B cell (primary cell): ENCODE measurements at regions of chr2 and their contacts with region 1.

Region 1: GRCh38 chr2:157497638-157498314 is 53.9 kb upstream of the CYTIP start:
- DNase-seq: peak; percentile 58
- ATAC-seq: peak; percentile 71
- H3K4me3 ChIP-seq: no peak overlapping the region
- H3K4me3 Mint-ChIP-seq: no peak overlapping the region
- H3K27ac ChIP-seq: no peak overlapping the region
- H3K27ac Mint-ChIP-seq: no peak overlapping the region
- H3K4me1 ChIP-seq: peaks cover 23 to 27% of the 10 kb centered on the region in 2 donors
- H3K4me1 Mint-ChIP-seq: peaks cover 41% of the 10 kb centered on the region
- H3K27me3 ChIP-seq: no peaks in the 10 kb centered on the region
- H3K27me3 Mint-ChIP-seq: no peaks in the 10 kb centered on the region
- CTCF ChIP-seq: peak; percentile 88

Region 2: GRCh38 chr2:157143901-157144300 is 353.9 kb before region 1 on chr2:
- CTCF ChIA-PET with region 1: no interaction called
- POLR2A ChIA-PET with region 1: no interaction called
- intact Hi-C with region 1: no loop called
- DNase-seq: no peak
- ATAC-seq: no peak
- H3K4me3 ChIP-seq: no peak overlapping the region
- H3K4me3 Mint-ChIP-seq: no peak overlapping the region
- H3K27ac ChIP-seq: no peak overlapping the region
- H3K27ac Mint-ChIP-seq: no peak overlapping the region
- H3K4me1 ChIP-seq: no peaks in the 10 kb centered on the region
- H3K4me1 Mint-ChIP-seq: no peaks in the 10 kb centered on the region
- H3K27me3 ChIP-seq: no peaks in the 10 kb centered on the region
- H3K27me3 Mint-ChIP-seq: no peaks in the 10 kb centered on the region
- CTCF ChIP-seq: no peak

Region 3: GRCh38 chr2:157596992-157597681 is 99.4 kb after region 1 on chr2:
- CTCF ChIA-PET with region 1: interaction called, 105 read pairs
- POLR2A ChIA-PET with region 1: no interaction called
- intact Hi-C with region 1: loop called (anchors 1 kb)
- DNase-seq: peak; percentile 67
- ATAC-seq: peak; percentile 84
- H3K4me3 ChIP-seq: peak overlapping the region in 3 of 5 experiments; percentile 6 to 42 (median 27)
- H3K4me3 Mint-ChIP-seq: peak overlapping the region; percentile 66
- H3K27ac ChIP-seq: no peak overlapping the region
- H3K27ac Mint-ChIP-seq: no peak overlapping the region
- H3K4me1 ChIP-seq: peaks cover 0 to 4% of the 10 kb centered on the region in 2 donors
- H3K4me1 Mint-ChIP-seq: peaks cover 7% of the 10 kb centered on the region
- H3K27me3 ChIP-seq: peaks cover 0 to 8% (median 2%) of the 10 kb centered on the region in 4 experiments
- H3K27me3 Mint-ChIP-seq: peaks cover 16% of the 10 kb centered on the region
- CTCF ChIP-seq: peak; percentile 75

Region 4: DNA sequence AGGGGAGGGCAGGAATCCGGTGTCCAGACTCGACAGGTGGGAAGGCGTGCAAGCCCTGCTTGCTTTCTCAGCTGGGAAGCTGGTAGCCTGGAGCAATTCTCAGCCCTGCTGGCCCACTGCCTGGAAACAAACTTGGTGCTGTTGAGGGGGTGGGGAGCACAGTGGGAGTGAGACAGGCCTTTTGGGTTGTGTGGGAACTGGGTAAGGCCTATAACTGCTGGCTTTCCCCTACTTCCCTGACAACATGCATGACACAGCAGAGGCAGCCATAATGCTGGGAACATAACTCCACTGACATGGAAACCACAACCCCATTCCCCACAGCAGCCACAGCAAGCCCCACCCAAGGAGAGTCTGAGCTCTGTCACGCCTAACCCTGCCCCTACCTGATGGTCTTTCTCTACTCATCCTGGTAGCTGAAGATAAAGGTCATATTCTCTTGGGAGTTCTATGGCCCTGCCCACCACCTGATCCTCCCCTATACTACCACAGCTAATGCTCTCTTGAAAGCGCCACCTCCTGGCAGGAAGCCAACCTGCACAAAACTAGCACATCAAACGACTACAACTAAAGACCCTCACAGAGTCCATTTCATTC is 253.8 kb after region 1 on chr2:
- CTCF ChIA-PET with region 1: interaction called, 5 read pairs
- POLR2A ChIA-PET with region 1: no interaction called
- intact Hi-C with region 1: loop called (anchors 5 kb)
- DNase-seq: peak; percentile 25
- ATAC-seq: peak; percentile 17
- H3K4me3 ChIP-seq: no peak overlapping the region
- H3K4me3 Mint-ChIP-seq: no peak overlapping the region
- H3K27ac ChIP-seq: no peak overlapping the region
- H3K27ac Mint-ChIP-seq: no peak overlapping the region
- H3K4me1 ChIP-seq: no peaks in the 10 kb centered on the region
- H3K4me1 Mint-ChIP-seq: peaks cover 2% of the 10 kb centered on the region
- H3K27me3 ChIP-seq: no peaks in the 10 kb centered on the region
- H3K27me3 Mint-ChIP-seq: no peaks in the 10 kb centered on the region
- CTCF ChIP-seq: peak; percentile 29